Cardiac septum (tissue), 1 donor: ENCODE measurements at regions of chr6 and their contacts with region 1.

Region 1: DNA sequence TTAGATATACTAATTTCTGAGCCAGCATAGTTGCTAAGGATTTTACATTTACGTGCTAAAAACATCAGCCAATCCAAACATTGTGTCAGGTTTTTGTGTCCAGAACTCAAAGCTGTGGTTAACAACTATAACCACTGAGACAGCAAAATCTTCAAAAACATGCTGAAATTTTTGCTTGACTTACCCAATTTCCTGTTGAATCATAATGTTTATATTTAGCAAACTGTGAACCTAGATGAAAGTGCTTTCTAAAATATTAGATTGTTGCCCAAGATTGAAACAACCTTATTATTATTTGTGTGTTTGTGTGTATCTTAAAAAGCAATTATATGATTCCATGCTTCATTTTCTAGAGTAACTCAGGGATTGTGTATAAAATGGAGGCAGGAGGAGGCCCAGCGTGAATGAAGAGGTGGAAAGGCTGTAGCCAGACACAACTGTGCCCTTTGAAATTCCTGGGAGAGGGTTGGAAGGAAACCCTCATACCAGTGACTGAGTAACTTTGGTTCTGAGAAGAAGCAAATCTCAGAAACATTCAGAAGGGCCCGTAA is 48.0 kb downstream of the ARMC2 start:
- DNase-seq: no peak

Region 2: DNA sequence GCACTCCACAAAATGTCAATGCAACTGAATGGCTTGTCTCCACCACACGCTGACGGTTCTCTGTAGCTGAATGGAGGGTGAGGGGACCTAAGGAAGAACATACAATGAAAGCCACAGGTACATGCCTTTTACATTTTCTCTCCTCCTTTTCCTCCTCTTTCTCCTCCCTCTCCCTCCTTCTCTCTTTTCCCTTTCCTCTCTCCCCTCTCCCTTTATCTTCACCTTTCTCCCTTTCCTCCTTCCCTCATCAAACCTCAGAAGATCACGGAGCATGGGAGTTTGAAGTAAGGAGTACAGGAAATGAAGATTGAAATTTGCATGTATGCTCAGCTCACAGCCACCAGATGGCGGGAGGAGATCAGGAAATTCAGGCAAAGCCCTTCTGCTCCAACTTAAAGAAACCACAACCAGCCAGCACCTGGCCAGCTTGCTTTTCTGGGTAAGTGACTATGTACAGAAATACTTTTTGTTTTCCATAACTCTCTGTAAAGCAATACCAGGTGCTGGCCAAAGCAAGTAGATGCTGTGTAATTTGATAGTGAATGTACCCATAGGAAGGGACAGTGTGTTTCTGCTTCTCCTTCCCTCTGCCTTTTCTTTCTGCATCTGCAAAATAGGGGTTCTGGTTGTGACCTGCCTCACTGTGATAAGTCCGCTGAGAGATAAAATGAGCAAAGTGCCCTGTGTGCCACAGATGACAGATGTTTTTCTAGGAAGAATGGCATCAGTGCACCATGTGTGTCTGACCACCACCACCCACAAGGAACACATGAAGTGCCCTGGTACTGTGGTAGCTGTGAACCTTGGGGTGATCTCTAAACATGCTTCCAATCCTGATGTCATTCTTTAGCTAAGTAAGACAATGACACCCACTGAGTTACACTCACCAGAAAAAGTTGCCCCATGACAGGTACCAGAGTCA is 354.1 kb before region 1 on chr6:
- intact Hi-C with region 1: loop called (anchors 2 kb)
- DNase-seq: no peak

Region 3: GRCh38 chr6:108782179-108783041 is 113.8 kb before region 1 on chr6:
- intact Hi-C with region 1: loop called (anchors 5 kb)
- DNase-seq: peak; percentile 92

Region 4: DNA sequence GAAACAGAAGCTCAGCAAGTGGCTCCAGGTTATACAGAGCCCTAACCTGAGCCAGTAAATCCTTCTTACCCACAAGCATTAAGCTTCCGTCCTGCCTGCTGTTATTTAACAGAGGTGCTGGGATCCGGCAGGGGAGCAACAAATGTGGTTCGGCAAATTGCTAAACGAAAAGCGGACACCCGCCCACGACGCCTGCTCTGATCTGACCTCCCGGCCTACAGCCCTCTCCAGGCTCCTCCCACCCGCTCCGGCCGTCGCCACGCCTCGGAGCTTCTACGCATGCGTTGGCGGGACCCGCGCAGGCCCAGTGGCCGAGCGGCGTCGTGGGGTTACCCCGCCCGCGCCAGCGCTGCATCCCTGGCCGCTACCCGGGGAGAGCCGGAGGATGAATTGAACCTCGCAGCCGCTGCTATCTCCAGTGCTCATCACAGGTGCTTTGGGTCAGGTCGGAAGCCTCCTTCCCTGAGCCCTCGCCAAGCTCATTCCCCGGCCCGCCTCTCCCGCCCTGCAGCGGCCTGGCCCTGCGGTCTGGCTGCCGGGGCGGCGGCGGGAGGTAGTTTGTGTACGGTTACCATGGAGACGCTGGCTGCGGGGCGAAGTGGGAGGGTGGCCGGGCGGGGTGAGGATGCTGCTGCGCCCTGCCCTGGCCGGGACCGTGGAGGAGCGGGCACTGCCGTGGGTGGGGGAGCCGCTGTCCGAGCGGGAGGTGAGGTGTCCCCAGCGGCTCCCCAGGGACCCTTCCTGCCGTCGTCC is 47.9 kb before region 1 on chr6 and contains the start of gene ARMC2:
- intact Hi-C with region 1: loop called (anchors 5 kb)
- DNase-seq: peak; percentile 99
- total RNA-seq, gene ARMC2: 11.0 TPM

Region 5: GRCh38 chr6:109002051-109002697 is 106.0 kb after region 1 on chr6:
- intact Hi-C with region 1: no loop called
- DNase-seq: no peak

Region 6: GRCh38 chr6:109073344-109074132 is 177.4 kb after region 1 on chr6:
- intact Hi-C with region 1: loop called (anchors 5 kb)
- DNase-seq: no peak